CD4-positive, alpha-beta T cell (primary cell): ENCODE measurements at regions of chr1 and their contacts with region 1.

Region 1: GRCh38 chr1:112715264-112716053 is at the start of gene PPM1J:
- DNase-seq: peak; percentile 91 to 99 (median 96)
- ATAC-seq: peak; percentile 84
- H3K4me3 ChIP-seq: peak within 1 kb of the TSS; percentile 69
- H3K4me3 Mint-ChIP-seq: peak within 1 kb of the TSS; percentile 89
- H3K27ac ChIP-seq: peak within 1 kb of the TSS in 1 of 2 donors; percentile 39
- H3K27ac Mint-ChIP-seq: peak within 1 kb of the TSS; percentile 81
- H3K4me1 ChIP-seq: peaks cover 37% of the 10 kb centered on the region
- H3K4me1 Mint-ChIP-seq: peaks cover 24% of the 10 kb centered on the region
- H3K27me3 ChIP-seq: peaks cover 15 to 22% of the 10 kb centered on the region in 2 experiments
- H3K27me3 Mint-ChIP-seq: peaks cover 35% of the 10 kb centered on the region
- CTCF ChIP-seq: no peak
- total RNA-seq, gene PPM1J: 0.39 to 0.49 TPM

Region 2: GRCh38 chr1:111967064-111967690 is 748.3 kb before region 1 on chr1:
- CTCF ChIA-PET with region 1: no interaction called
- POLR2A ChIA-PET with region 1: no interaction called
- intact Hi-C with region 1: no loop called
- DNase-seq: no peak
- ATAC-seq: no peak
- H3K4me3 ChIP-seq: no peak overlapping the region
- H3K4me3 Mint-ChIP-seq: no peak overlapping the region
- H3K27ac ChIP-seq: no peak overlapping the region
- H3K27ac Mint-ChIP-seq: no peak overlapping the region
- H3K4me1 ChIP-seq: no peaks in the 10 kb centered on the region
- H3K4me1 Mint-ChIP-seq: no peaks in the 10 kb centered on the region
- H3K27me3 ChIP-seq: peaks cover 10 to 22% of the 10 kb centered on the region in 2 experiments
- H3K27me3 Mint-ChIP-seq: peaks cover 57% of the 10 kb centered on the region
- CTCF ChIP-seq: no peak

Region 3: DNA sequence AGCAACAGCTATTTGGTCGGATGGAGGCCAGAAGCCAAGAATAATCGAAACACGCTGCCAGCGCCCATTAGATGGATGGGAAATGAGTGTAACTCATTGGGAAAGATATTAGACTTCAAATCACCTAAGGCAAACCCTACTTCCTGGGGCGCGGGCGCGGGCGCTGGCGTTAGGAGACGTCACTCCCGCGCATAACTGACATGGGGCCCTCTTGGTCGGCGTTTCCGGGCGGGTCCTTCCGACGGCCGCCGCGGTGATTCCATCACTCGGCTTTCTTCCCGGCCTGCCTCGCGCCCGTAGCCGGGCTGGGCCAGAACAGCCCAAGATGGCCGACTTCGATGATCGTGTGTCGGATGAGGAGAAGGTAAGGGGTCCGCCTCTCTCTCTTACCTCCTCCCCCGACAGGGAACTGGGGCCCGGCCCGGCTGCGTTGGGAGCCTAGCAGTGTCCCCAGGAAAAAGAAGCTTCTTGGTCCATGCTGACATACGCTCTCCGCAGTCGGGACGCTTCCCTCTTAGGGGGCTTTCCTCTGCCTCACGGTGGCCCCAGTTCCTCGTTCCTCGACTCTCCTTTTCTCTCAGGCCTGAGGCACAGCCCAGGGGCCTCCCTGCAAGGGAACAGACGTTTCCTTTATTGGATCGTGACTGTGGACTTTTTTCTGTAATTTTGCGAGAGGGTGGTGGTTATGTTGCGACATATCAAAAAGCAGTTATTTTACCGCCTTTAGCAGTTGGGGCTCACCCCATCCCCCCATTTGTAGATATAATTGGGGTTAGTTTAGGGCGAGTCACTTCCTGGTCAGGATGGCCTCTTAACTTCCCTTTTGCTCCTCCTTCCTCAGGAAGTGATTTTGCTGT is 95.7 kb before region 1 on chr1 and contains the start of gene CAPZA1:
- CTCF ChIA-PET with region 1: interaction called, 7 read pairs
- POLR2A ChIA-PET with region 1: interaction called, 41 read pairs
- intact Hi-C with region 1: loop called in 1 of 2 experiments (anchors 5 kb)
- DNase-seq: peak; percentile 80 to 96 (median 88)
- ATAC-seq: peak; percentile 67
- H3K4me3 ChIP-seq: peak within 1 kb of the TSS; percentile 69
- H3K4me3 Mint-ChIP-seq: peak within 1 kb of the TSS; percentile 100
- H3K27ac ChIP-seq: peak within 1 kb of the TSS; percentile 98 to 100
- H3K27ac Mint-ChIP-seq: peak within 1 kb of the TSS; percentile 95
- H3K4me1 ChIP-seq: peaks cover 38% of the 10 kb centered on the region
- H3K4me1 Mint-ChIP-seq: peaks cover 54% of the 10 kb centered on the region
- H3K27me3 ChIP-seq: no peaks in the 10 kb centered on the region
- H3K27me3 Mint-ChIP-seq: no peaks in the 10 kb centered on the region
- CTCF ChIP-seq: no peak
- total RNA-seq, gene CAPZA1: 166 to 179 TPM

Region 4: DNA sequence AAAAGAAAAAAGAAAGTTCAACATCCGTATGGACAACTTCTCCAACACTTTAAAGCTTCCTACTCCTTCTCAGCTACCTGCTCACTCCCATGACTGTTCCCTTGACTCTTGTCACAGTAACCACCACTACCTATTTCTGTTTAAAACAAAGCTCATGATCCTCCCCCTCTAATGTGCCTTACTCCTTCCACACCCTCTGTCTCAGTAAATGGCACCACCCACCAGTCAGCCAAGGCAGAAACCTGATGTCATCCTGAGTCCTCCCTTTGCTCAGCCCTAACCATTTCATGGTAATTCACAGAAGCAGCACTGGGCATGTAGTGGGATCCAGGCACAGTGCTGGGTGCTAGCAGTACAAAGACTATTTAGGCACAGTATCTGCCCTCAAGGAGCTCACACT is 62.7 kb after region 1 on chr1:
- CTCF ChIA-PET with region 1: no interaction called
- POLR2A ChIA-PET with region 1: no interaction called
- intact Hi-C with region 1: no loop called
- DNase-seq: no peak
- ATAC-seq: no peak
- H3K4me3 ChIP-seq: no peak overlapping the region
- H3K4me3 Mint-ChIP-seq: no peak overlapping the region
- H3K27ac ChIP-seq: no peak overlapping the region
- H3K27ac Mint-ChIP-seq: no peak overlapping the region
- H3K4me1 ChIP-seq: no peaks in the 10 kb centered on the region
- H3K4me1 Mint-ChIP-seq: no peaks in the 10 kb centered on the region
- H3K27me3 ChIP-seq: peaks cover 0 to 2% of the 10 kb centered on the region in 2 experiments
- H3K27me3 Mint-ChIP-seq: peaks cover 15% of the 10 kb centered on the region
- CTCF ChIP-seq: no peak

Region 5: DNA sequence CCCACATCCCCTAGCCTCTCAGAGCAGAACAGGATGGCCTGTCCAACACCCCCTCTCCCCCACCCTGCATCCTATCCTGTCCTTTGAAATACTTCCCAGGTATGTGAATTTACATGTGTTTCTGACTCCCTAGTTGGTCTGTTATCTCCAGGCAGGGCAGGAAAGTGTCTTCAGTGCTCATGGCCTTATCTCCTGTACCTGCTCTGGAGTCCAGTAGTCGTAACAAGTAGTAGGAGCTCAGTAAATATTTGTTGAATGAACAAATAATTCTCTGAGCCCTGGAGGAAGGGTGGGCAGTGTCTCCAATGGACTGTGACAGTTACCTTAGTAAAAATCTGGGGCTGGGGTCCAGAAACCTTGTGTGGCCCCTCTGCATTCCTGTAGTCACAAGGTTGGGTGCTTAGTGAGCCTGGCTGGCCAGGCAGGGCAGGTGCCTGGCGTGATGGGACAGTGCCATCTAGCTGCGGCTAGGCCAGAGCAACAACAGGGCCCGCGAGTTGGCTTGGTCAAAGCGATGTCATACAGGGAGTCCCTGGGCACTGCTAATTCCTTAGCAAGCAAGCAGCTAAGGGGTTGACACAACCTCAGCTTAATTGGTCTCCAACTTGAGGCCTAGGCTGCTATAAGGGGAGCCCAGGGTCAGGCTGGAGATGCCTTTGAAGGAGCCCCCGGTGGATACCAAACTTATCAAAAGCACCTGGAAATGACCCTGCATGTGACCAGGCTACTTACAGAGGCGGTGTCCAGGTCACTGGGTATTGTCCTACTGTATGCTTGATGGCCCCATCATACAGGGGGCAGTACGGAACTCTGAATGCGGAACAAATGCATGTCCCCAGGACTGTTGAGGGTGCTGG is 88.7 kb after region 1 on chr1:
- CTCF ChIA-PET with region 1: interaction called, 9 read pairs
- POLR2A ChIA-PET with region 1: no interaction called
- intact Hi-C with region 1: loop called (anchors 1 kb)
- DNase-seq: peak in 13 of 14 experiments; percentile 6 to 63 (median 22)
- ATAC-seq: peak; percentile 57
- H3K4me3 ChIP-seq: no peak overlapping the region
- H3K4me3 Mint-ChIP-seq: no peak overlapping the region
- H3K27ac ChIP-seq: no peak overlapping the region
- H3K27ac Mint-ChIP-seq: no peak overlapping the region
- H3K4me1 ChIP-seq: no peaks in the 10 kb centered on the region
- H3K4me1 Mint-ChIP-seq: no peaks in the 10 kb centered on the region
- H3K27me3 ChIP-seq: no peaks in the 10 kb centered on the region
- H3K27me3 Mint-ChIP-seq: peaks cover 3% of the 10 kb centered on the region
- CTCF ChIP-seq: peak; percentile 15

Region 6: DNA sequence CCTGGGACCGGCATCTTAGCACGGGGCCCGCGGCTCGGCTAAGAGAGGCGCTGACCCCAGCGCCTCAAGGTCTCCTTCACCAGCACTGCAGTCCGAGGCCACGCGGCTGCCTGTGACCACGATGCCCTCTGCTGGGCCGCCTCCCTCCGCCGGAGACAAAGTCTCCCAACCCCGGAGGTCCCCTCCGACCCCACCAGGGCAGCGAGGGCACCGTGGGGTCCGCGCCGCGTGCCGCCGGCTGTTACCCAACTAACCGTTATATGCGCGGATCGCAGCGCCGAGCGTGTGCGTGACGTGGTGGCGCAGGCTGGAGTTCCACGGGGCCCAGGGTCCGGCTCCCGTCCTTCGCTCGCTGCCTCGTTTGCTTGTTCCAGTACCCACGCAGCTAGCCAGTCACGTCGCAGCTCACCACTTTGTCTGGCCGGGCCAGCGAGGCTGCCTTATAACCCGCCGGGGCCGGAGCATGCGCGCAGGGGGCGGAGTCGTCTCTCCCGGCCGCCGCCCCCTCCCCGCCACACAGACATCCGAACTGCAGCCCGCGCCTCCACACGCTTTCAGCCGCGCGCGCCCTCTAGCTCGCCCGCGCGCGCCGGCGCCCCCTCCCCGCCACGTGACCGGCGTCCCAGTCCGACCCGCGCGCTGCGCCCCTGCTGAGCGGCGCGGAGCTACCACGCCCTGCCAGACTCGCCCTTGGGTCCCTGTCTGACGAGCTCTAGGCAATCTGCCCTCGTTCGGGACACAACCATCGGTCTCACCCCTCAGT is 240.5 kb after region 1 on chr1 and contains the start of gene SLC16A1:
- CTCF ChIA-PET with region 1: interaction called, 3 read pairs
- POLR2A ChIA-PET with region 1: interaction called, 4 read pairs
- intact Hi-C with region 1: loop called (anchors 2 to 5 kb)
- DNase-seq: peak; percentile 78 to 95 (median 86)
- ATAC-seq: peak; percentile 74
- H3K4me3 ChIP-seq: peak within 1 kb of the TSS; percentile 86
- H3K4me3 Mint-ChIP-seq: peak within 1 kb of the TSS; percentile 98
- H3K27ac ChIP-seq: peak within 1 kb of the TSS; percentile 80 to 84
- H3K27ac Mint-ChIP-seq: peak within 1 kb of the TSS; percentile 76
- H3K4me1 ChIP-seq: peaks cover 35% of the 10 kb centered on the region
- H3K4me1 Mint-ChIP-seq: peaks cover 61% of the 10 kb centered on the region
- H3K27me3 ChIP-seq: no peaks in the 10 kb centered on the region
- H3K27me3 Mint-ChIP-seq: no peaks in the 10 kb centered on the region
- CTCF ChIP-seq: peak; percentile 14
- total RNA-seq, gene SLC16A1: 22.9 to 26.6 TPM

Region 7: DNA sequence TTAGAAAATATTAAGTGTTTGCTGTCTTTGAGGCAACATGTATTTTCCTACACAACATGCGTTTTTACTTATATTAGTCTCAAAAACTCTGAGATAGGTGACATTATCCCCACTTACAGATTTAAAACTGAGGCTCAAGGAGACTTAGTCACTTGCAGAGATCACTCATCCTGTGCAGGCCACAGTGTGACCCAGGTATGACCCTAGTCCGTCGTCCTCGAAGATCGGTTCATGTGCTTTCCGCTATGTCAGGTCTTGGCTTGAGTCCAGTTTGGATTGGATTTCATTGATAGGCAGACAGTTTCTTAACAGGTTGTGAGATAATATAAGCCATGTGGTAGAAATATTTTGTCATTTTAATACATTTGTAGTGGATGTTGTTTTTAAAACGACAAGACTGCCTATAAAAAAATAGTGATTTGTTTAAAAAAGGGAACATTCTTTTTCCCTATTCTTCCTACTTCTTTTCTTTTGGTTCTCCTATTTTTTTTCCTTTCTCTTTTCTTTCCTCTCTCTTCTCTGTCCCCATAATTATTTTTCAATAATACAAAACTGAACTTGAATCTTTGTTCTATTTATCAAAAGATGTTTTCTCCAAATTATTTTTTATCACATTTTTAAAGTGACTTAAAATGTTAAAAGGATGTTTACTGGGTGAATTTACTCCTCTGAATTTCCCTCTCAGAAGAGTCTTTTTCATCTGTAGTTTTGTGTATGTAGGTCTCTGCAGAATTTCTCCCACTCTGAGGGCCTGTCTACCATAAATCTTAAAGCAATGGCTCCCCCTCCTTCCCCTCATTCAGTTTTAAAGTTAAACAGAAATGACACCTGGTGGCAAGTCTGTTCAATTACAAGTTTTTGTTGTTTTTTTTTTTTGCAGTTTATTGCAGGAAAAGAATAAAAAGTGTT is 962.0 kb after region 1 on chr1:
- CTCF ChIA-PET with region 1: interaction called, 3 read pairs
- POLR2A ChIA-PET with region 1: no interaction called
- intact Hi-C with region 1: loop called (anchors 2 to 5 kb)
- DNase-seq: peak in 4 of 14 experiments; percentile 3 to 58 (median 52)
- ATAC-seq: peak; percentile 49
- H3K4me3 ChIP-seq: no peak overlapping the region
- H3K4me3 Mint-ChIP-seq: no peak overlapping the region
- H3K27ac ChIP-seq: no peak overlapping the region
- H3K27ac Mint-ChIP-seq: no peak overlapping the region
- H3K4me1 ChIP-seq: no peaks in the 10 kb centered on the region
- H3K4me1 Mint-ChIP-seq: no peaks in the 10 kb centered on the region
- H3K27me3 ChIP-seq: no peaks in the 10 kb centered on the region
- H3K27me3 Mint-ChIP-seq: no peaks in the 10 kb centered on the region
- CTCF ChIP-seq: peak; percentile 69